ENCODE measurements at regions of chr10 and their contacts with region 1.

Region 1: DNA sequence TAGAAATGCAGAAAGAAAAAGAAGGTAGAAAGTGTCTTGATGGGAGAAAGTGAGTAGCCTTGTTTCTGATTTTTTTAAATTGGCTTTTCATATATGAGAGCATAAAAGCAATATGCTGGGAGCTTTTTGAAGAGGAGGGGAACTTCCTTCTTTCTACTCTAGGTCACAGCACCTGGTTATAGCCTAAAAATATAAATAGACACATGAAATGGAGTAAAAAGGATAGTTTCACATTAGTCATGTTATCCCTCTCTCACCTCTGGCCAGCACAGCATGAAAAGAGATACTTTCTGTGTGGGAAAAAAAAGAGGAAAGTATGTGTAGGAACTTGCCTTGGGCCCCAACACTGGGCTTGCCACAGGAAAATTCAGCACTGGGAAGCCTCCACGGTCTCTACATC is 292.2 kb upstream of the ZWINT start:
- DNase-seq: no peak
- H3K4me3 ChIP-seq: no peak overlapping the region
- H3K27ac ChIP-seq: no peak overlapping the region
- H3K4me1 ChIP-seq: no peaks in the 10 kb centered on the region
- H3K27me3 ChIP-seq: no peaks in the 10 kb centered on the region
- CTCF ChIP-seq: no peak
- POLR2A ChIP-seq: no peak

Region 2: DNA sequence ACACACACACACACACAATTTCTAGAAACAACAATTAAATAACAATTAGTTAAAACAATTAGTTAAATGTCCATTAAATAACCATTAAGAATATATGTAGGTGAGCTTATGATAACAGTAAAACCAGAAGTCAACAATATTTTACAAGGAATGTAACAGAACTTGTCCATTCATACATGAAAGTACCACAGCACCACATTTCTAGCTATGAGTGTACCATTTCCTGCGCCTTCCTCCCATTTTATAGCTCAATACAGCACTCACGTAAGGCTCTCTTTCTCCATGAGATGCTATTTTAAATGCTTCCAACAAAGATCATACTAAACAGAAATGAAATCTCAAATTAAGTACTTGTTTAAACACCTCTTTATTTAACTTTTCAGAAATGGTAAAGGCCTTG is 75.1 kb after region 1 on chr10:
- intact Hi-C with region 1: loop called (anchors 5 kb)
- DNase-seq: no peak
- H3K4me3 ChIP-seq: no peak overlapping the region
- H3K27ac ChIP-seq: no peak overlapping the region
- H3K4me1 ChIP-seq: no peaks in the 10 kb centered on the region
- H3K27me3 ChIP-seq: no peaks in the 10 kb centered on the region
- CTCF ChIP-seq: no peak
- POLR2A ChIP-seq: no peak